K562 (cell line): ENCODE measurements at regions of chr4 and their contacts with region 1.

Region 1: GRCh38 chr4:71941001-71941400 is 90.8 kb upstream of the NPFFR2 start:
- DNase-seq: peak; percentile 12 to 58 (median 17)
- ATAC-seq: peak; percentile 66
- H3K4me3 ChIP-seq: no peak overlapping the region
- H3K27ac ChIP-seq: no peak overlapping the region
- H3K4me1 ChIP-seq: no peaks in the 10 kb centered on the region
- H3K27me3 ChIP-seq: no peaks in the 10 kb centered on the region
- CTCF ChIP-seq: peak; percentile 43 to 67 (median 52); a peak in 5 of 6 replicates
- EP300 ChIP-seq: no peak
- POLR2A ChIP-seq: no peak
- RAD21 ChIP-seq: peak; percentile 62 to 71

Region 2: GRCh38 chr4:71270901-71271300 is 670.1 kb before region 1 on chr4:
- CTCF ChIA-PET with region 1: no interaction called
- POLR2A ChIA-PET with region 1: no interaction called
- in situ Hi-C with region 1: no loop called
- intact Hi-C with region 1: loop called (anchors 10 kb)
- DNase-seq: peak; percentile 9 to 56 (median 12)
- ATAC-seq: peak; percentile 86
- H3K4me3 ChIP-seq: no peak overlapping the region
- H3K27ac ChIP-seq: no peak overlapping the region
- H3K4me1 ChIP-seq: no peaks in the 10 kb centered on the region
- H3K27me3 ChIP-seq: no peaks in the 10 kb centered on the region; a peak in 1 of 5 replicates
- CTCF ChIP-seq: peak; percentile 40 to 59 (median 51)
- EP300 ChIP-seq: no peak
- POLR2A ChIP-seq: no peak
- RAD21 ChIP-seq: peak; percentile 65 to 70

Region 3: DNA sequence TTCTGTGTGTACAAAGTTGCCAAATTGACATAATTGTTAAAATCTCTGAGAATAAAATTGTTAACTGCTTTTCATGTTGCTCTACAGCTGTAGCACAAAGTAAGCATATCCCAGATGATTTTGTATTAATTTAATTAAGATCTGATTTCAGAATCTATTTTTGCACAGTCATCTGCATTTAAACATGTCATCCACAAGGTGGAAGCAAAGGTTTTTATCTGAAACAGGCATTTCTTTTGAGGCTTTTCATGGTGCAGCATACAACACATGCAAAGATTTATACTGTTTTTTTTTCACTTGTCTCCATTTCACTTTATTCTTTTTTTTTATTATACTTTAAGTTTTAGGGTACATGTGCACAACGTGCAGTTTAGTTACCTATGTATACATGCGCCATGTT is 208.3 kb before region 1 on chr4:
- CTCF ChIA-PET with region 1: interaction called, 5 read pairs
- POLR2A ChIA-PET with region 1: no interaction called
- in situ Hi-C with region 1: no loop called
- intact Hi-C with region 1: loop called (anchors 2 kb)
- DNase-seq: peak; percentile 9 to 21 (median 16)
- ATAC-seq: no peak
- H3K4me3 ChIP-seq: no peak overlapping the region
- H3K27ac ChIP-seq: no peak overlapping the region
- H3K4me1 ChIP-seq: no peaks in the 10 kb centered on the region
- H3K27me3 ChIP-seq: peaks cover 0 to 9% of the 10 kb centered on the region in 2 experiments; a peak in 2 of 5 replicates
- CTCF ChIP-seq: peak in 2 of 3 experiments; percentile 41 to 66; a peak in 3 of 6 replicates
- EP300 ChIP-seq: no peak
- POLR2A ChIP-seq: no peak
- RAD21 ChIP-seq: peak; percentile 77 to 78

Region 4: GRCh38 chr4:71974681-71975080 is 33.7 kb after region 1 on chr4:
- CTCF ChIA-PET with region 1: no interaction called
- POLR2A ChIA-PET with region 1: no interaction called
- in situ Hi-C with region 1: no loop called
- intact Hi-C with region 1: no loop called
- DNase-seq: no peak
- ATAC-seq: no peak
- H3K4me3 ChIP-seq: no peak overlapping the region
- H3K27ac ChIP-seq: no peak overlapping the region
- H3K4me1 ChIP-seq: no peaks in the 10 kb centered on the region
- H3K27me3 ChIP-seq: no peaks in the 10 kb centered on the region
- CTCF ChIP-seq: no peak
- EP300 ChIP-seq: no peak
- POLR2A ChIP-seq: no peak
- RAD21 ChIP-seq: no peak

Region 5: DNA sequence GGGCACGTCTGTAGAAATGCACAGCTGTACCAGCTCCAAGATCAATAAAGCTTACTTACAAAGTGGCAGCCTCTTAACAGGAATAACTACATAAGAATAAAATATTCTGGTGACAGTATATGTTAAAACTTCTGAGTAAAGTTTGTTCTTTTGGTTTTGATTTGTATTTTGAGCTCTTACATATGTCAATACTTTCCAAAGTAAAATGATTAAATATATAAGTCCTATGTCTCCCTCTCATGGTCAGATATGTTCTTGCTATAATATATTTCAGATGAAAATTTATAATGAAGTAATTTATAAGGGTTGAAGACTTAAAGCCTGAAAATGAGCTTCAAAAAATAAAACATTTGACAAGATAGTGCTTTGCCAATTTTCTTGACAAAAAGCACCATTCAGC is 345.2 kb after region 1 on chr4:
- CTCF ChIA-PET with region 1: no interaction called
- POLR2A ChIA-PET with region 1: no interaction called
- in situ Hi-C with region 1: no loop called
- intact Hi-C with region 1: loop called (anchors 10 kb)
- DNase-seq: no peak
- ATAC-seq: no peak
- H3K4me3 ChIP-seq: no peak overlapping the region
- H3K27ac ChIP-seq: no peak overlapping the region
- H3K4me1 ChIP-seq: no peaks in the 10 kb centered on the region
- H3K27me3 ChIP-seq: no peaks in the 10 kb centered on the region
- CTCF ChIP-seq: peak in 1 of 3 experiments; percentile 25; a peak in 2 of 6 replicates
- EP300 ChIP-seq: no peak
- POLR2A ChIP-seq: no peak
- RAD21 ChIP-seq: peak in 1 of 2 experiments; percentile 4; a peak in 2 of 4 replicates